ENCODE measurements at regions of chr2 and their contacts with region 1.

Region 1: DNA sequence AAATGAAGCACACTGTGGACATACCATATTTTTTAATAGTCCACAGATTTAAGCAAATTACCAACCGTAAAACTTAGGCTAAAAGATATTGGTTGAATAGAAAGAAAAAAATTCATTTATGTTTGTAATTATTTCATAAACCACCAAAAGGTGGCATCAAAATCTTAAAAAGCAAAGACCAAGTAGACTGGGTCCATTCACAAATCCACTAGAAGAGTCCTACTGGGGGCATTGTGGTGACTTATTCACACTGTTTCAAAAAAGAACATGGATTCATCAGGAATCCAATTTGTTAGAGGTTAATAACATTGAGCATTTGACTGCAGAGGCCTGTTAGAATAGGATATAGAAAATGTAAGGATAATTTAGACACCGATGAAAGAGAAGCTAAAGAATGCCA is 194.9 kb upstream of the KYNU start:
- DNase-seq: peak; percentile 46
- H3K4me3 ChIP-seq: no peak overlapping the region
- H3K27ac ChIP-seq: no peak overlapping the region
- H3K4me1 ChIP-seq: no peaks in the 10 kb centered on the region
- H3K27me3 ChIP-seq: peaks cover 0 to 3% of the 10 kb centered on the region in 2 experiments
- CTCF ChIP-seq: no peak
- POLR2A ChIP-seq: no peak

Region 2: GRCh38 chr2:142877216-142877756 is 194.8 kb after region 1 on chr2 and contains the start of gene KYNU:
- CTCF ChIA-PET with region 1: interaction called, 38 read pairs
- POLR2A ChIA-PET with region 1: no interaction called
- dilution Hi-C with region 1: no loop called
- intact Hi-C with region 1: loop called (anchors 2 kb)
- DNase-seq: no peak
- H3K4me3 ChIP-seq: no peak within 1 kb of the TSS
- H3K27ac ChIP-seq: no peak within 1 kb of the TSS
- H3K4me1 ChIP-seq: peaks cover 23% of the 10 kb centered on the region
- H3K27me3 ChIP-seq: no peaks in the 10 kb centered on the region
- CTCF ChIP-seq: no peak
- POLR2A ChIP-seq: no peak
- total RNA-seq, gene KYNU: 0.25 TPM in 1 of 2 replicates, not detected in the other

Region 3: GRCh38 chr2:142989273-142990204 is 307.0 kb after region 1 on chr2:
- CTCF ChIA-PET with region 1: interaction called, 91 read pairs
- POLR2A ChIA-PET with region 1: no interaction called
- dilution Hi-C with region 1: no loop called
- intact Hi-C with region 1: loop called (anchors 1 kb)
- DNase-seq: peak; percentile 46
- H3K4me3 ChIP-seq: no peak overlapping the region
- H3K27ac ChIP-seq: no peak overlapping the region
- H3K4me1 ChIP-seq: no peaks in the 10 kb centered on the region
- H3K27me3 ChIP-seq: no peaks in the 10 kb centered on the region
- CTCF ChIP-seq: peak; percentile 9 to 22
- POLR2A ChIP-seq: no peak

Measured in endothelial cell of umbilical vein (primary cell).